ENCODE measurements at regions of chr22 and their contacts with region 1.

Region 1: DNA sequence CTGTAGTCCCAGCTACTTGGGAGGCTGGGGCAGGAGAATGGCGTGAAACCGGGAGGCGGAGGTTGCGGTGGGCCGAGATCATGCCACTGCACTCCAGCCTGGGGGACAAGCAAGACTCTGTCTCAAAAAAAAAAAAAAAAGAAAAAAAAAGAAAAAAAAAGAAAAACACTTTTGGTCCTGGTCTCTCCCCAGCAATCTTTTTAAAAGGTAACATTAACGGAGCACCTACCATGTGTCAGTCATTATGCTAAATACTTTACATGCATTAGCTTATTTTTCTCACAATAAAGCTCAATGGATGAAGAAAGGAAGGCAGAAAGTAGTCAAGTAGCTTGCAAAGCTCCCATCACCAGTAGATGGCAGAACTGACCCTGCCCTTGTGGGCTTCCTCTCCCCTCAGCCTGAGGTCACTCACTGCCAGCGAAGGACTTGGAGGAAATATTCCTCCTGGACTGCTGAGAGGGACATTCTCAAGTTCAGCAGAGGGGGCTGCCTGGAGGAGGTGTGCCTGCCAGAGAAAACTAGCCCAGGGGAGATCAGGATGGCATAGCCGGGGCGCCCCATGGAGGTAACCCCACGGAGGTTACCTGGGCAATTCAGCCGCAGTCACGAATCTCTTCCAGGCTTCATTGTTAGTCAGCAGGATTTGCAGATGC is 15.5 kb downstream of the APOL3 start:
- DNase-seq: peak; percentile 47
- ATAC-seq: peak; percentile 83
- H3K4me3 ChIP-seq: no peak overlapping the region
- H3K27ac ChIP-seq: no peak overlapping the region
- H3K4me1 ChIP-seq: peaks cover 26% of the 10 kb centered on the region
- H3K27me3 ChIP-seq: no peaks in the 10 kb centered on the region
- CTCF ChIP-seq: peak; percentile 86
- EP300 ChIP-seq: no peak
- POLR2A ChIP-seq: no peak
- RAD21 ChIP-seq: peak; percentile 74

Region 2: DNA sequence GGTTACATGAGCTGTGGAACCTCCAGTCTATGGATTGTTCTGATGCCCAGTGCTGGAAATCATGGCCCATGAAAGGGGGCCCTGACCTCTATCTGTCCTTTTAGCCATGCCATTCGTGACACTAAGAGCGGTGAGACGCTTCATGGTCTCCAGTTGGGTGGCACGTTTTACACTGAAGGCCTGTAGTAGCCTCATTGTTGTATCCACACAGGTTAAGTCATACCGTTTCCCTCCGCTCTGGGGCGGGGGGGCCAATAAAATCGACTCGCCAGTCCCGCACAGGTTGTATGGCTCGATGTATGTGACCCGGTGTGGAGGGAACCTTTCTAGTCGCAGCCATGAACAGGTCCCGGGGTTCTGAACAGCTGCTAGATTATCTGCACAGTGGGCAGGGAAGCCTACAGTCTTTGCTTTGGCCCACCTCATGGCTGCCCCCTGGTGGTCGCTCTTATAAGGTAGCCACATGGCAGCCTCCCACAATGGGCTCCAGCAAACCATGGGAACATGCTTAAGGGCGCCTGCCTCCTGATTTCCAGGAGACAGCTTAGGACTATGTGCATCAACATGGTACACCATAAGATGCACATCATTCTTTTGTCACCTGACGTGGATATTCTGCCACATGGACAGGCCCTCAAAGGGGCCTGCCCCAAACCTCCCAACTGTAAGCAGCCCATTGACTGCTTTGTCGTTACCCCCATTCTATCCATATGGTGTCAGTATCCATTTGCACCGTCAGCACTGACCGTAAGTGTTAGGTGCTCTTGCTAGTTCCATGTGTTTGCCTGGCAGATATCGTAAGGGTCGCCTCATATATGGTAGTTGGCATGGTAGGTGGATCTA is 35.2 kb after region 1 on chr22:
- CTCF ChIA-PET with region 1: interaction called, 42 read pairs
- POLR2A ChIA-PET with region 1: no interaction called
- in situ Hi-C with region 1: loop called (anchors 5 kb)
- intact Hi-C with region 1: loop called (anchors 1 kb)
- DNase-seq: peak; percentile 56
- ATAC-seq: peak; percentile 97
- H3K4me3 ChIP-seq: peak overlapping the region in 1 of 3 experiments; percentile 30; a peak in 1 of 6 replicates
- H3K27ac ChIP-seq: no peak overlapping the region
- H3K4me1 ChIP-seq: no peaks in the 10 kb centered on the region
- H3K27me3 ChIP-seq: peaks cover 3 to 19% of the 10 kb centered on the region in 2 experiments; a peak in 4 of 5 replicates
- CTCF ChIP-seq: peak; percentile 90
- EP300 ChIP-seq: no peak
- POLR2A ChIP-seq: no peak
- RAD21 ChIP-seq: peak; percentile 81